CD14-positive monocyte (primary cell): ENCODE measurements at regions of chr14 and their contacts with region 1.

Region 1: GRCh38 chr14:69726761-69727511 is 40.0 kb upstream of the SRSF5 start:
- DNase-seq: peak; percentile 67 to 77 (median 71)
- H3K4me3 ChIP-seq: peak overlapping the region; percentile 15 to 59 (median 27)
- H3K4me3 Mint-ChIP-seq: peak overlapping the region; percentile 73 to 83
- H3K27ac ChIP-seq: peak overlapping the region in 1 of 2 donors; percentile 42
- H3K27ac Mint-ChIP-seq: peak overlapping the region in 6 of 7 donors; percentile 22 to 86 (median 60)
- H3K4me1 ChIP-seq: peaks cover 23 to 28% of the 10 kb centered on the region in 2 donors
- H3K4me1 Mint-ChIP-seq: peaks cover 25% of the 10 kb centered on the region
- H3K27me3 ChIP-seq: no peaks in the 10 kb centered on the region
- H3K27me3 Mint-ChIP-seq: peaks cover 6 to 9% (median 7%) of the 10 kb centered on the region in 3 donors
- CTCF ChIP-seq: peak; percentile 99

Region 2: DNA sequence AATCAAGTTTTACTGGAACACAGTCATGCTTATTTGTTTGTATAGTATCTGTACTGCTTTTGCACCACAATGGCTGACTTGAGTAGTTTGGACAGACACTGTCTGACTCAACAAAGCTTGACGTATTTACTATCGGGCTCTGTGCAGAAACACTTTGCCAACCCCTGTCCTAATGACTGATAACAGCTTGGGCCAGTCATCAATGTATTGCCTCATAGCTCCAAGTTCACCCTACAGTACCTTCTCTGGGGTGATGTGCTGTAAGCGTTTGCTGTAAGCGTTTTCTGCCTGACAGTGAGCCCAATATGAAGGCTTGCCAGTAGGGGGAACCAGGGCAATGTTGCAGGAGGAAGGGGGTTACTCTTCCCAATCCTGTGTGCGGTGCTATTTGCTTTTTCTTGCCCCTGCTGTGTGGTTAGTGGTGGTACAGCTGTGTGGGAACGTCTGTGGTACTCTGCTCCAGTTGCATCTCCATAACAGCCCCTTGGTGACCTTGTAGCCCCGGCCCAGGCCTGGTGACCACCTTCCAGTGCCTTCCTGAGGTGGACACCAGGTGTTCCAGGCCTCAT is 146.8 kb before region 1 on chr14:
- intact Hi-C with region 1: loop called (anchors 1 kb)
- DNase-seq: peak; percentile 14 to 45 (median 20)
- H3K4me3 ChIP-seq: no peak overlapping the region
- H3K4me3 Mint-ChIP-seq: no peak overlapping the region
- H3K27ac ChIP-seq: no peak overlapping the region
- H3K27ac Mint-ChIP-seq: peak overlapping the region in 1 of 7 donors; percentile 85
- H3K4me1 ChIP-seq: peaks cover 4 to 7% of the 10 kb centered on the region in 2 donors
- H3K4me1 Mint-ChIP-seq: peaks cover 19% of the 10 kb centered on the region
- H3K27me3 ChIP-seq: peaks cover 0 to 30% of the 10 kb centered on the region in 2 donors
- H3K27me3 Mint-ChIP-seq: peaks cover 31 to 40% (median 32%) of the 10 kb centered on the region in 3 donors
- CTCF ChIP-seq: peak; percentile 42

Region 3: GRCh38 chr14:69600304-69600891 is 126.5 kb before region 1 on chr14:
- intact Hi-C with region 1: loop called (anchors 2 to 5 kb)
- DNase-seq: no peak
- H3K4me3 ChIP-seq: no peak overlapping the region
- H3K4me3 Mint-ChIP-seq: no peak overlapping the region
- H3K27ac ChIP-seq: no peak overlapping the region
- H3K27ac Mint-ChIP-seq: no peak overlapping the region
- H3K4me1 ChIP-seq: no peaks in the 10 kb centered on the region
- H3K4me1 Mint-ChIP-seq: no peaks in the 10 kb centered on the region
- H3K27me3 ChIP-seq: no peaks in the 10 kb centered on the region
- H3K27me3 Mint-ChIP-seq: peaks cover 0 to 7% (median 2%) of the 10 kb centered on the region in 3 donors
- CTCF ChIP-seq: no peak

Region 4: DNA sequence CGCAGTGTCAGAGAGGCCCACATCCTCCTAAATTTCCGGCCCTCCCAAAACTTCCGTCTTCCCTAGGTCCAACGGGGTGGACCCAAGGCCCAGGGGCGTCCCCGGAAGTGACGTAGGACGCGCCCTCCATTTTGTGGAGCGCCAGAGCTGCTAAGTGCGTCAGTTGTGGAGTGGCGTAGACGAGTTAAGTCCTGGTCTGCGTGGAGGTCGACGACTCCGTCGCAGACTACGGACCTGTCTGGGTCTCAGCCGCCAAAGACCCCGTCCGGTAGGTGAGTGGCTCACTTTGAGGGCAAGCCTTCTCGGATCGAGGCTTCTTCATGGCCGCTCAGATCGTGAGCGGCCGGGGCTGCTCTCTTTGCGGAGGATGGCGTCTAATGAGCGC is 40.0 kb after region 1 on chr14 and contains the start of gene SRSF5:
- intact Hi-C with region 1: loop called in 1 of 2 experiments (anchors 5 kb)
- DNase-seq: peak; percentile 99
- H3K4me3 ChIP-seq: peak within 1 kb of the TSS; percentile 62 to 100 (median 83)
- H3K4me3 Mint-ChIP-seq: peak within 1 kb of the TSS; percentile 97 to 98
- H3K27ac ChIP-seq: peak within 1 kb of the TSS; percentile 98 to 100
- H3K27ac Mint-ChIP-seq: peak within 1 kb of the TSS; percentile 99 to 100 (median 100)
- H3K4me1 ChIP-seq: peaks cover 18 to 28% of the 10 kb centered on the region in 2 donors
- H3K4me1 Mint-ChIP-seq: peaks cover 35% of the 10 kb centered on the region
- H3K27me3 ChIP-seq: no peaks in the 10 kb centered on the region
- H3K27me3 Mint-ChIP-seq: no peaks in the 10 kb centered on the region
- CTCF ChIP-seq: no peak
- polyA plus RNA-seq, gene SRSF5: 410 to 554 (median 502) TPM